Heart left ventricle (tissue), 16 donors: ENCODE measurements at regions of chr2 and their contacts with region 1.

Region 1: GRCh38 chr2:2763411-2764355 is 432.6 kb upstream of the MYT1L start:
- DNase-seq: no peak
- ATAC-seq: peak in 1 of 4 donors; percentile 18
- H3K4me3 ChIP-seq: no peak overlapping the region
- H3K27ac ChIP-seq: no peak overlapping the region
- H3K4me1 ChIP-seq: peaks cover 0 to 8% (median 0%) of the 10 kb centered on the region in 12 donors
- H3K27me3 ChIP-seq: no peaks in the 10 kb centered on the region
- CTCF ChIP-seq: no peak
- POLR2A ChIP-seq: no peak

Region 2: DNA sequence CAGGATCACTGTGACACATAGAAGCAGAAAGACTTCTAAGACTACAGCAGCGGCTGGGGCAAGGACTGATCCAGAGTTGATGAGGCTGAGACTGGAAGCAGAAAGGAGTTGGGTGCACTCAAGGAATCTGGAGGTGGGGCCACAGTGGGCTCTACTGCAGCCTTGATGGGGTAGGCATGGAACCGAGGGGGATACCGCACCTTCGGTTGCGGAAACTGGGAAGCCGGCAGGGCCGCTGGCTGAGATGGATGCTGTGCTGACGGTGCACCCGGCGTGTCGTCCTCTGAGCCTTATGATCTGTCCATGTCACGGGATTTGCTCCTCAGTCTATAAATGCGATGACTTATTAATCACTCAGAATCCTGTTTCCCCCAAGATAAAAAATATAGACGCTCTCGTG is 40.8 kb after region 1 on chr2:
- intact Hi-C with region 1: loop called in 1 of 10 experiments (anchors 2 kb)
- DNase-seq: no peak
- ATAC-seq: no peak
- H3K4me3 ChIP-seq: no peak overlapping the region
- H3K27ac ChIP-seq: no peak overlapping the region
- H3K4me1 ChIP-seq: no peaks in the 10 kb centered on the region
- H3K27me3 ChIP-seq: peaks cover 0 to 2% (median 0%) of the 10 kb centered on the region in 9 donors
- CTCF ChIP-seq: no peak
- POLR2A ChIP-seq: no peak

Region 3: GRCh38 chr2:2837746-2838547 is 74.3 kb after region 1 on chr2:
- intact Hi-C with region 1: no loop called
- DNase-seq: no peak
- ATAC-seq: no peak
- H3K4me3 ChIP-seq: no peak overlapping the region
- H3K27ac ChIP-seq: no peak overlapping the region
- H3K4me1 ChIP-seq: peaks cover 0 to 6% (median 0%) of the 10 kb centered on the region in 12 donors
- H3K27me3 ChIP-seq: no peaks in the 10 kb centered on the region
- CTCF ChIP-seq: no peak
- POLR2A ChIP-seq: no peak